GM18951 (cell line): ENCODE measurements at regions of chr5 and their contacts with region 1.

Region 1: DNA sequence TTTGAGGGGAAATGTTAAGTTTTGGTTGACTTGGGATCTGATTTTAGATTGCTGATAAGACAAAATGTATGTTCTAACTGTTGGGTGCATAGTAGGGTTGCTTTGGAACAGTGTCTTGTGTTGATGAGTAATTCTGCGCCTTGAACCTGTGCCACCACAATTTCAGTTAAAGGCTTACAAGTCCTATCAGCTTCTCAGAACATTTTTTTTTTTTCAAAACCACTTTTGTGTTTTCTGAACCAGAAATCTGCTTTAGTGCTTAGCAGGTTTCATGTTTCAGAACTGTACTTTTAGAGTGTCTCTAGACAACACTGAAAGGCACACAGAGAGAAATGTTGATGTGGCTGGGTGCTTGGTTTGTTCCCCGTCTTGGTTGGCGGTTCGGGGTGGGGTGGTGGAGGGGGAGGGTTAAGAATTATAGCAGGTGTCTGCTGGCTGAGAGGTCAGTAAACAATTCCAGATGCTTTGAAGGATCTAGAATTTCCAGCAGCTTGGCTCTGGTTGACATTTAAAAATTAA is 84.6 kb downstream of the ANKRD55 start:
- POLR2A ChIP-seq: no peak

Region 2: GRCh38 chr5:54457094-54457862 is 1691.2 kb before region 1 on chr5:
- in situ Hi-C with region 1: no loop called
- POLR2A ChIP-seq: no peak

Region 3: DNA sequence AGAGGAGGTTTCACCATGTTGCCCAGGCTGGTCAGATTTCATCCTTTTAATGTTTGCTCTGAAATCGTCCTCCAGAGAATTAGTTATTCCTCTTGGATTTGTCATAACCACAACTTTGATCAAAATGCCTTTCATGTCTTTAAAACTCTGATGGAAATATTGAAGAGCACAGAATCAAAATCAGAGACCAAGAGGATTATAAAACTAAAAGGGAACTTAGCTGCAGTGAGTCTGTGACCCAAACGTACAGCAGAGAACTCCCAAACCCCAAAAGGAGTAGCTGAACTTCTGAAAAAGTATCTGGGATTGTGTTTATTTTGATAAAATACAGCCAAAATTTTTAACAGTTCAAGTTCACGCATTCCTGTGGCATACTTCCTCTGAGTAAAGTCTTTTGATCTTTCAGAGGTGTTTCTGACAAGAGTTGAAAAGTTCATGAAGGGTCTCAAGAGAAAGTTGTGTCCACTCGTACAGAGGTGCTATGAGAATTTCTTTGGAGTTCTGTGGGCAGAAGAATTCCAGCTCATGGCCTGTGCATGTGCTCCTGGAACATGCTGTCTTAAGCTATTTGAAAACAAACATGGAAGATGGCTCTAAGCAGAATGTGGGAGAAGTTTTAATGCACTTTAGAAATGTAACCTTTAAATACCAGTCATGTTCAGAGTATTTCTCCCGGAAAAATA is 1287.2 kb before region 1 on chr5:
- in situ Hi-C with region 1: no loop called
- POLR2A ChIP-seq: no peak

Region 4: DNA sequence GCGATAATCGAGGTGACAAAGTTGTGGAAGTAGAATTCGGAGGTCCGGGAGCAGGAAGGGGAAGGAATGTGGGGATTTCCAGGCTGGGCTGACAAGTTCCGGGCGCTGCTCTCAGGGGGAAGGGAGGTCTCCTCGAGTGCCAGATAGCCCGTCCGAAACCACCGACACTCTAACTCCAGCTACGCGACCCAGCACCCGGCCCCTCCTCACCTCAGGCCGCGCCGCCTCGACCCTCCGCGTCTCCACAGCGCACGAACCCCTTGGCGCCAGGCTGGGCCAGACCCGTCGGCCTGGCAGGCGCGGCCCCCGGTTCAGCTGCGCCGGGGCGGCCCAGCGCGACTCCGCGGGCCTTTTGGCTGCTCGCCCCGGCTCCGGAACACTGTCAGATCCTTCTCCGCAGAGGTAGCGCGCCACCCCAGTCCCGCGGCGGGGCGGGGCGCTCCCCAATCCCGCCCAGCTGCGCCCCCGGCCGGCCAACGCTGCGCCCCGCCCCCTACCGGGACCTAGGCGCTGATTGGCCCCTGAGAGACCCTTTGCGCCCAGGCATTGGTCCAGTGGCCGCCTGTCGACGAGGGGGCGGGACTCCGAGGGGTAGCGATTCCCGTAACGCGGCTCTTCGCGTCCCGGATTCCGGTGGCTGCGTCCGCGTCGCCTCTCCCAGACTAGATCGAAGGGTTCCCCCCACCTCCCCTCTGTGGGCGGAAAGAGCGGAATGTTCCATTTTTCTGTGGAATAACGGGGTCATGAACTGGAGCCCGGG is 153.8 kb before region 1 on chr5 and contains the start of gene IL6ST:
- in situ Hi-C with region 1: loop called (anchors 10 kb)
- POLR2A ChIP-seq: peak; percentile 92

Region 5: DNA sequence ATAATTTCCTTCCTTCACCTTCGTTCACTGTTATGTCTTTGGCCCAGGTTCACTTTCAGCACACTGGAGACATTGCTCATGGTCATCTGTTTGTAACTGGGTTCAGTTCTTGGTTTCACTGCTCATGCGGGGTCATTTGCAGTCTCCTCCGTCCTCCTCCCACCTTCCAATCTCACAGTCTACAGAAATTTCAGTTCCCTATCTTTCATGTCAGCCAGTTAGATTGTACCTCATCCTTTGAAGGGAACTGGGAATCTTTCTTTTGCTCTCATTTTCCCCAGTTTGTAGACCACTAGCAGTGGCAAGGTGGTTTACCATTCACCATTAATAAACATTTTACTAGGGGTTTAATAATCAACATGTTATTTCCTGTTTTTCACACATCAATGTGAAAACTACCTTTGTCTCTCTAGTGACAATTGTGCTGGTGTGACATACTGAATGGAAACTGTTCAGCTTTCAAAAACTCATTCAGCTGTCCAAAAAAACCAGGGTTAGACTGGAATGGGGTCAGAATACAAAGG is 52.9 kb before region 1 on chr5:
- in situ Hi-C with region 1: loop called (anchors 10 kb)
- POLR2A ChIP-seq: no peak